Activated naive CD4-positive, alpha-beta T cell treated with anti-CD3 and anti-CD28 coated beads for 36 hours (primary cell): ENCODE measurements at regions of chr3 and their contacts with region 1.

Region 1: GRCh38 chr3:186882881-186883685 is 40.6 kb downstream of the ADIPOQ start:
- DNase-seq: peak; percentile 74
- H3K4me3 Mint-ChIP-seq: peak overlapping the region; percentile 14
- H3K27ac Mint-ChIP-seq: peak overlapping the region; percentile 72
- H3K4me1 Mint-ChIP-seq: peaks cover 56% of the 10 kb centered on the region
- H3K27me3 Mint-ChIP-seq: no peaks in the 10 kb centered on the region

Region 2: GRCh38 chr3:186826976-186827731 is 55.9 kb before region 1 on chr3:
- CTCF ChIA-PET with region 1: no interaction called
- intact Hi-C with region 1: loop called (anchors 1 kb)
- DNase-seq: peak; percentile 82
- H3K4me3 Mint-ChIP-seq: peak overlapping the region; percentile 78
- H3K27ac Mint-ChIP-seq: peak overlapping the region; percentile 69
- H3K4me1 Mint-ChIP-seq: peaks cover 30% of the 10 kb centered on the region
- H3K27me3 Mint-ChIP-seq: peaks cover 38% of the 10 kb centered on the region

Region 3: DNA sequence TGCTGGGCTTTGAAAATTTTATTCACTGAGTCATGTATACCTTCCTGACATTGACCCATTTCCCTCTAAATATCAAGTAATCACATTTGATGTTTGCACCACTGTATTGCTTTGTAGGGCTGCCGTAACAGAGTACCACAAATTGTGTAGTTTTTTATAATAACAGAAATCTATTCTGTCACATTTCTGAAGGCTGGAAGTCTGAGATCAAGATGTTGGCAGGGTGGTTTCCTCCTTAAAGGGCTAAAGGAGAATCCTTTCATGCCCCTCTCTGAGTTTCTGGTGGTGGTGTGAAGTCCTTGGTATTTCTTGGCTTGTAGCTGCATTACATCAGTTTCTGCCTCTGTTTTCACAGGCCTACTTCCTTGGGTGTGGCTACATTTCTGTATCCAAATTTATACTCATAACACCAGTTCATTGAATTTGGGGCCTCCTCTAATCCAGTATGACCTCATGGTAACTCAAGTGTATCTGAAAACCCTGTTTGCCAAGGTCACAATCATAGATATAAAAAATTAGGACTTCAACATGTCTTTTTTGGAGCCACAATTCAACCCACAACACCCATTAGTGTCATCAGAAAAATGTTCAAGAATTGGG is 18.2 kb after region 1 on chr3:
- CTCF ChIA-PET with region 1: no interaction called
- intact Hi-C with region 1: loop called (anchors 1 kb)
- DNase-seq: peak; percentile 31
- H3K4me3 Mint-ChIP-seq: no peak overlapping the region
- H3K27ac Mint-ChIP-seq: peak overlapping the region; percentile 32
- H3K4me1 Mint-ChIP-seq: peaks cover 19% of the 10 kb centered on the region
- H3K27me3 Mint-ChIP-seq: no peaks in the 10 kb centered on the region

Region 4: GRCh38 chr3:186988806-186989205 is 105.7 kb after region 1 on chr3:
- CTCF ChIA-PET with region 1: no interaction called
- intact Hi-C with region 1: loop called (anchors 1 kb)
- DNase-seq: peak; percentile 47
- H3K4me3 Mint-ChIP-seq: no peak overlapping the region
- H3K27ac Mint-ChIP-seq: peak overlapping the region; percentile 83
- H3K4me1 Mint-ChIP-seq: peaks cover 59% of the 10 kb centered on the region
- H3K27me3 Mint-ChIP-seq: no peaks in the 10 kb centered on the region

Region 5: DNA sequence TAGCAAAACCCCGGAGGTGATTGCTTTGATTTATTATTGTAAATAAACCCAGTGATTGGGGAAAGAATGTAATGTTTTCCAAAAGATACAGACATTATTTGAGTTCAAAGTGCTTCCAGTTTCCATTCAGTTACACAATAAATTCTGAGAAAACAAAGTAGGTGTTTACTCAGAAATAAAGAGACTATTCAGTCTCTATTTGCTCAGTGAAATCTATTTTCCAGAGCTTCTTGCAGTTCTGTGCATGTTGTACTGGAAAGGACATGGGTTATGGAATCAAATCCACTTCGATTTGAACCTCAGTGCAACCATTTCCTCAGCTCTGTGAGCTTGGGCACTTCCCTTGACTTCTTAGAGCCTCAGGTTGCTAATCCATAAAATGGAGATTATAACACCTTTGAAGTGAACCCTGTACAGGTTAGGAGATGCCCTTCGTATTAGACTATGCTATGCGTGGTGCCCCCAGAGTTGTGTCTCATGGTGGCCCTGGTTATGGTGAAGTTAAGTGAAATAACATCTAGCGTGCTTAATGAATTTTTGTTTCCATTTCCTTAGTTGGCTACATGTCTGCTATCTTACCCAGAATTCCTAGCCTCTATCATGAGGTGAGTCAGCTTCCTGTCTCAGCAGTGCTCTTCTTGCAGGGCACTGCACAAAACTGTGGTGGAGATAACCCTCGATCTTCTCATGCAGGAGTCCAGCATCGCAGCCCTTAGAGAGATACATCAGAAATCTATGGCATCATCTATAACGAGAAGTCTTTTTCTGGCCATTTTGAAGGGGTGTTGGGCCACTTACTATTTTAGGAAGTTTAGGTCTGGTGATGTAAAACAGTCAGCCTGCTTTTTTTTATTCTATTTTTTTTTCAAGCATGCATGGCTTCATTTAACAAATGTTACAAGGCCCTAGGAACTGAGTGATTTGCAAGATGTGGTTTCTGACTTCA is 158.6 kb after region 1 on chr3:
- CTCF ChIA-PET with region 1: no interaction called
- intact Hi-C with region 1: loop called (anchors 1 kb)
- DNase-seq: peak; percentile 73
- H3K4me3 Mint-ChIP-seq: peak overlapping the region; percentile 60
- H3K27ac Mint-ChIP-seq: peak overlapping the region; percentile 98
- H3K4me1 Mint-ChIP-seq: peaks cover 82% of the 10 kb centered on the region
- H3K27me3 Mint-ChIP-seq: no peaks in the 10 kb centered on the region

Region 6: DNA sequence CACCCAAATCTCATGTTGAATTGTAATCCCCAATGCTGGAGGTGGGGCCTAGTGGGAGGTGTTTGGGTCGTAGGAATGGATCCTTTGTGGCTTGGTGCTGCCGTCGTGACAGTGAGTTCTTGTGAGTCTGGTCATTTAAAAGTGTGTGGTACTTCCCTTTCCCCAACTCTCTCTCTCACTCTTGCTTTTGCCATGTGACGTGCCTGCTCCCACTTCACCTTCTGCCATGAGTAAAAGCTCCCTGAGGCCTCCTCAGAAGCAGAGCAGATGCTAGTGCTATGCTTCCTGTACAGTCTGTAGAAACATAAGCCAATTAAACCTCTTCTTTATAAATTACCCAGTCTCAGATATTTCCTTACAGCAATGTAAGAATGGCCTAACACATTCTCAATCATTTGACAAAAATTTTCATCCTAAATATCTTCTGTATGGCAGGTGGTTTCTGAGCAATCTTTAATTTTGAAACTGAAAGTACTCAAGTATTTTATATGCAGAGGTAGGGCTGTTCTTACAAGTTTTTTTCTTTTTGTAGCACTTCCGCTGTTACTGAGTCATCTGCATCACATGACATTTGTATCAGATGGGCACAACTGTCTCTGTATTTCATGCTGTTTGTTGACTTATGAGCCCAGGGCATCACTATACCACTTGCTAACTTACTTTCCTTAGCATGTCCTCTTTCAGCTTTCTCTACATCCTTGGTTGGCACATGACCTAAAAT is 247.4 kb after region 1 on chr3:
- CTCF ChIA-PET with region 1: no interaction called
- intact Hi-C with region 1: loop called (anchors 1 kb)
- DNase-seq: peak; percentile 64
- H3K4me3 Mint-ChIP-seq: peak overlapping the region; percentile 42
- H3K27ac Mint-ChIP-seq: peak overlapping the region; percentile 98
- H3K4me1 Mint-ChIP-seq: peaks cover 40% of the 10 kb centered on the region
- H3K27me3 Mint-ChIP-seq: no peaks in the 10 kb centered on the region

Region 7: GRCh38 chr3:187186801-187187421 is 303.8 kb after region 1 on chr3:
- CTCF ChIA-PET with region 1: no interaction called
- intact Hi-C with region 1: no loop called
- DNase-seq: no peak
- H3K4me3 Mint-ChIP-seq: no peak overlapping the region
- H3K27ac Mint-ChIP-seq: no peak overlapping the region
- H3K4me1 Mint-ChIP-seq: no peaks in the 10 kb centered on the region
- H3K27me3 Mint-ChIP-seq: peaks cover 14% of the 10 kb centered on the region

Region 8: GRCh38 chr3:187210545-187211327 is 327.7 kb after region 1 on chr3:
- CTCF ChIA-PET with region 1: no interaction called
- intact Hi-C with region 1: no loop called
- DNase-seq: no peak
- H3K4me3 Mint-ChIP-seq: no peak overlapping the region
- H3K27ac Mint-ChIP-seq: no peak overlapping the region
- H3K4me1 Mint-ChIP-seq: no peaks in the 10 kb centered on the region
- H3K27me3 Mint-ChIP-seq: no peaks in the 10 kb centered on the region